ENCODE measurements at regions of chr10 and their contacts with region 1.

Region 1: GRCh38 chr10:32033171-32033570 is 23.1 kb downstream of the KIF5B start:
- DNase-seq: no peak
- ATAC-seq: no peak
- H3K4me3 ChIP-seq: no peak overlapping the region
- H3K27ac ChIP-seq: no peak overlapping the region
- H3K4me1 ChIP-seq: peaks cover 0 to 9% (median 0%) of the 10 kb centered on the region in 9 donors
- H3K27me3 ChIP-seq: no peaks in the 10 kb centered on the region
- CTCF ChIP-seq: no peak

Region 2: GRCh38 chr10:31808258-31809218 is 224.6 kb before region 1 on chr10:
- intact Hi-C with region 1: no loop called
- DNase-seq: peak in 1 of 2 donors; percentile 39
- ATAC-seq: peak in 7 of 8 donors; percentile 75 to 90 (median 82)
- H3K4me3 ChIP-seq: peak overlapping the region in 9 of 10 donors; percentile 26 to 55 (median 47)
- H3K27ac ChIP-seq: peak overlapping the region; percentile 25 to 86 (median 77)
- H3K4me1 ChIP-seq: peaks cover 0 to 22% (median 11%) of the 10 kb centered on the region in 9 donors
- H3K27me3 ChIP-seq: no peaks in the 10 kb centered on the region
- CTCF ChIP-seq: peak; percentile 38 to 78 (median 66)

Region 3: DNA sequence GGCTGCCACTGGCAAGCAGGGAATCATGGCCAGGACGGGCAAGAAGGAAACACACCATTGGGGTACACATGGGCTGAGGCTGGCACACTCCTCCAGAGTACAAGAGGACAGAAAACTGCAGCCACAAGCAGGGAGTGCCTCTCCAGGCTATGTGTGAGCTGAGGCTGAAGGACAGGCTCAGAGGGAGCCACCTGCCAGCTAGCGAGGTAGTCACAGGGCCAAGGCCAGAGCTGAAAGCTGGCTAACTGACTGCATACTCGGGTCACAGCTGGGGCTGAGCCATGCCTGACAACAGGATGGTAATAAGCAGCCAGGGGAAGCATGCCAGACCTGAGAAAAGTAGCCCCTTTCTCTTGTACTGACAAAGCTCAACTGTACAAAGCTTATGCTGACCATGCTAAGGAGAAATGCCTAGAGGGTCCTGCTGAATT is 29.0 kb before region 1 on chr10:
- intact Hi-C with region 1: no loop called
- DNase-seq: peak; percentile 32 to 37
- ATAC-seq: peak; percentile 43 to 91 (median 83)
- H3K4me3 ChIP-seq: no peak overlapping the region
- H3K27ac ChIP-seq: peak overlapping the region in 3 of 10 donors; percentile 30 to 54 (median 52)
- H3K4me1 ChIP-seq: peaks cover 0 to 23% (median 8%) of the 10 kb centered on the region in 9 donors
- H3K27me3 ChIP-seq: no peaks in the 10 kb centered on the region
- CTCF ChIP-seq: no peak

Region 4: DNA sequence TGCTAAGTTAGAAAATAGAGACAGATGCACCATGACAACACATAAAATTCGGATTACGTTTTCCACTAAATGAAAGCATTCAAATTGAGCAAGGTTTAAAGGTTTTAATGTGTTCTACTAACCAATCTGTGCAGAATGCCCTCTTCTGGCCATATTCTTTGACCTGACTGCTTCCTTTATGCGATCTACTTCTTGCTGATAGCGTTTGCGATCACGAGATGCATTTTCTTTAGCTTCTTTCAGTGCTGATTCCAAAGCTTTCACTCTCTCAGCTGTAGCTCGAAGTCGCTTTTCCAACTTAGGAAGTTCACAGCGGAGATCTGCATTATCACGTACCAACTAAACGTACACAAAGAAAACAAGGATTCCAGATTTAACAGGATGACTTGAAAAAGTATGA is 16.1 kb before region 1 on chr10:
- intact Hi-C with region 1: loop called in 1 of 10 experiments (anchors 2 kb)
- DNase-seq: no peak
- ATAC-seq: no peak
- H3K4me3 ChIP-seq: no peak overlapping the region
- H3K27ac ChIP-seq: no peak overlapping the region
- H3K4me1 ChIP-seq: no peaks in the 10 kb centered on the region
- H3K27me3 ChIP-seq: no peaks in the 10 kb centered on the region
- CTCF ChIP-seq: no peak

Region 5: GRCh38 chr10:32263300-32263699 is 230.1 kb after region 1 on chr10:
- intact Hi-C with region 1: no loop called
- DNase-seq: no peak
- ATAC-seq: peak in 1 of 8 donors; percentile 25
- H3K4me3 ChIP-seq: no peak overlapping the region
- H3K27ac ChIP-seq: no peak overlapping the region
- H3K4me1 ChIP-seq: peaks cover 0 to 2% (median 0%) of the 10 kb centered on the region in 9 donors
- H3K27me3 ChIP-seq: no peaks in the 10 kb centered on the region
- CTCF ChIP-seq: no peak